Activated T-helper 2 cell treated with anti-CD3 and anti-CD28 coated beads, Interferon-gamma antibody, Interleukin-2, Interleukin-4, amounts not matched to agents 10 μg/mL and 5 μg/mL and 100 μg/mL, durations not matched to agents 14 hours and 24 hours and 36 hours (primary cell): ENCODE measurements at regions of chr2 and their contacts with region 1.

Region 1: GRCh38 chr2:203814661-203815540 is 52.7 kb upstream of the CTLA4 start:
- DNase-seq: peak; percentile 33
- H3K4me3 Mint-ChIP-seq: peak overlapping the region; percentile 41
- H3K27ac Mint-ChIP-seq: peak overlapping the region; percentile 59
- H3K4me1 Mint-ChIP-seq: peaks cover 56% of the 10 kb centered on the region
- H3K27me3 Mint-ChIP-seq: no peaks in the 10 kb centered on the region

Region 2: GRCh38 chr2:203238704-203239526 is 576.0 kb before region 1 on chr2 and contains the start of gene CYP20A1:
- intact Hi-C with region 1: loop called (anchors 5 kb)
- DNase-seq: peak; percentile 96
- H3K4me3 Mint-ChIP-seq: peak within 1 kb of the TSS; percentile 91
- H3K27ac Mint-ChIP-seq: peak within 1 kb of the TSS; percentile 100
- H3K4me1 Mint-ChIP-seq: peaks cover 18% of the 10 kb centered on the region
- H3K27me3 Mint-ChIP-seq: no peaks in the 10 kb centered on the region
- total RNA-seq, gene CYP20A1: 21.0 and 23.2 TPM in 2 replicates

Region 3: GRCh38 chr2:203535078-203535783 is 279.7 kb before region 1 on chr2 and contains the start of gene RAPH1:
- intact Hi-C with region 1: loop called (anchors 5 kb)
- DNase-seq: peak; percentile 50
- H3K4me3 Mint-ChIP-seq: peak within 1 kb of the TSS; percentile 87
- H3K27ac Mint-ChIP-seq: peak within 1 kb of the TSS; percentile 78
- H3K4me1 Mint-ChIP-seq: peaks cover 22% of the 10 kb centered on the region
- H3K27me3 Mint-ChIP-seq: peaks cover 57% of the 10 kb centered on the region
- total RNA-seq, gene RAPH1: 2.8 and 4.6 TPM in 2 replicates

Region 4: DNA sequence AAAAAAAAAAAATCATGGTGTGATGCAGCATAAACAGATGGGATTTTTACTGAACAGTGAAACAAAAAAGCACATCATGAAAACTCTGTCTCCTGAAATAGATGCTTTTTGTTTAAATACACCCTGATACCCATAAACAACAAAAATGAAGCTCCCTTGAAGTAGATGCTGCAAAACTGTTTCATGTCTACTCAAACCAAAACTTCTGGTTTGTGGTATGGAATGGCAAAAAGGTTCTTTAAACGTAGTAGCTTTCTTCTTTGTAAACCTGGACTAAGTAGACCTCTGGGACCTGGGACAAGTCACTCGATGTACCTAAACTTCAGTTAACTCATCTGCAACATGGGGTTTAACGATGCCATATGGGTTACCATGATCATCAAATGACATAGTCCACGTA is 215.4 kb before region 1 on chr2:
- intact Hi-C with region 1: loop called (anchors 2 kb)
- DNase-seq: no peak
- H3K4me3 Mint-ChIP-seq: no peak overlapping the region
- H3K27ac Mint-ChIP-seq: no peak overlapping the region
- H3K4me1 Mint-ChIP-seq: peaks cover 35% of the 10 kb centered on the region
- H3K27me3 Mint-ChIP-seq: peaks cover 51% of the 10 kb centered on the region

Region 5: DNA sequence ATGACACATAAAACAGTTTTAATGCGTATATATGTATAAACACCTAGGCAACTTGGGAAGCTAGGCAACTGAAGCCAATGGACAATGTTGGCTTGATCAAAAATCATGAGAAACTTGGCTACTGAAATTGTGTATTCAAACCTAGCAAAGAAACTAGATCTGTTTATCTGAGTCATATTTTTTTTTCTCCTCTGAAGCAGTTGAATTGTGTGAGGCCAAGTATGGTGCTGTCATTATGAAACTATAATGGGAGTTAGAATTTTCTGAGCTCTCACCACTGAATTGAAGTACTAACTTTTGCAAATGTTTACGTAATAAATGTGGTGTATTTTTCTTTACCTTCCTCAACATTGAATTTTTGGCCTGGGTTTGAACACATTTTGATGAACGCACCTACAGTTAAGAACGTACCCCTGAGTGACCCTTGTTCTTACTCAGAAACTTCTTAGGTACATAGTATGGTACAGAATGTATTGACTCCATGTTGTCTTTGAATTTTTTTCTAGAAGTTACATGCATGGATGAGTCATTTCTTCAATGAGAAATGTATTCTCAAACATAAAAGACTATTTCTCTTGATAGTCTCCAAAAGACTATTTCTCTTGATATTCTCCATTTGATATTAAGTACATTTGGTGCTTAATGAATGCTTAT is 84.7 kb before region 1 on chr2:
- intact Hi-C with region 1: loop called (anchors 5 kb)
- DNase-seq: no peak
- H3K4me3 Mint-ChIP-seq: peak overlapping the region; percentile 1
- H3K27ac Mint-ChIP-seq: peak overlapping the region; percentile 83
- H3K4me1 Mint-ChIP-seq: peaks cover 75% of the 10 kb centered on the region
- H3K27me3 Mint-ChIP-seq: no peaks in the 10 kb centered on the region

Region 6: GRCh38 chr2:203804070-203804469 is 10.8 kb before region 1 on chr2:
- intact Hi-C with region 1: loop called (anchors 1 kb)
- DNase-seq: peak; percentile 36
- H3K4me3 Mint-ChIP-seq: no peak overlapping the region
- H3K27ac Mint-ChIP-seq: peak overlapping the region; percentile 61
- H3K4me1 Mint-ChIP-seq: peaks cover 68% of the 10 kb centered on the region
- H3K27me3 Mint-ChIP-seq: no peaks in the 10 kb centered on the region

Region 7: GRCh38 chr2:203871371-203871983 is 56.6 kb after region 1 on chr2:
- intact Hi-C with region 1: loop called (anchors 5 kb)
- DNase-seq: peak; percentile 60
- H3K4me3 Mint-ChIP-seq: peak overlapping the region; percentile 96
- H3K27ac Mint-ChIP-seq: peak overlapping the region; percentile 95
- H3K4me1 Mint-ChIP-seq: peaks cover 57% of the 10 kb centered on the region
- H3K27me3 Mint-ChIP-seq: no peaks in the 10 kb centered on the region